CD8-positive, alpha-beta T cell (primary cell): ENCODE measurements at regions of chr7 and their contacts with region 1.

Region 1: DNA sequence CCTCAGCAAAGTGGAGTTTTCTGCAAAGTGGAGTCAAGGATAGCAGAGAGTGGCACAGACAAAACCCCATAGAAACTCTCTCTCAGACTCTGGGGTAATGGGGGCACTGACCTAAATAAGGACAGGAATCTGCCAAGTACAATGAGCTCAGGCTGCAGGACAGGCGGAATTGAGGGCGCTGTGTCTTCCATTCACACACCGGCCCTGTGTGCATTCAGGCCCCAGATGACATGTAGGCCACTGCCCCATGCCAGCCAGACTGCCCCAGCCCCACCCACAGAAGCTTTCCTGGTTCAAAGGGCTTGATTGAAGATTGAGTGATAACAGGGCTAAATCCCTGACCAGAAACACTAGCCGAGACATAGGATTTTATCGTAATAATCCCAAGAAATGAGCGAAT is 52.7 kb downstream of the EEPD1 start:
- DNase-seq: no peak
- ATAC-seq: no peak
- H3K4me3 ChIP-seq: no peak overlapping the region
- H3K4me3 Mint-ChIP-seq: no peak overlapping the region
- H3K27ac ChIP-seq: no peak overlapping the region
- H3K27ac Mint-ChIP-seq: no peak overlapping the region
- H3K4me1 ChIP-seq: peaks cover 16% of the 10 kb centered on the region
- H3K4me1 Mint-ChIP-seq: peaks cover 32% of the 10 kb centered on the region
- H3K27me3 ChIP-seq: no peaks in the 10 kb centered on the region
- H3K27me3 Mint-ChIP-seq: no peaks in the 10 kb centered on the region
- CTCF ChIP-seq: no peak

Region 2: GRCh38 chr7:36238138-36238537 is 32.3 kb after region 1 on chr7:
- CTCF ChIA-PET with region 1: no interaction called
- POLR2A ChIA-PET with region 1: no interaction called
- intact Hi-C with region 1: loop called in 1 of 2 experiments (anchors 2 kb)
- DNase-seq: no peak
- ATAC-seq: no peak
- H3K4me3 ChIP-seq: no peak overlapping the region
- H3K4me3 Mint-ChIP-seq: no peak overlapping the region
- H3K27ac ChIP-seq: no peak overlapping the region
- H3K27ac Mint-ChIP-seq: no peak overlapping the region
- H3K4me1 ChIP-seq: no peaks in the 10 kb centered on the region
- H3K4me1 Mint-ChIP-seq: no peaks in the 10 kb centered on the region
- H3K27me3 ChIP-seq: no peaks in the 10 kb centered on the region
- H3K27me3 Mint-ChIP-seq: no peaks in the 10 kb centered on the region
- CTCF ChIP-seq: no peak